Activated CD4-positive, alpha-beta memory T cell treated with anti-CD3 and anti-CD28 coated beads for 36 hours (primary cell): ENCODE measurements at regions of chr5 and their contacts with region 1.

Region 1: DNA sequence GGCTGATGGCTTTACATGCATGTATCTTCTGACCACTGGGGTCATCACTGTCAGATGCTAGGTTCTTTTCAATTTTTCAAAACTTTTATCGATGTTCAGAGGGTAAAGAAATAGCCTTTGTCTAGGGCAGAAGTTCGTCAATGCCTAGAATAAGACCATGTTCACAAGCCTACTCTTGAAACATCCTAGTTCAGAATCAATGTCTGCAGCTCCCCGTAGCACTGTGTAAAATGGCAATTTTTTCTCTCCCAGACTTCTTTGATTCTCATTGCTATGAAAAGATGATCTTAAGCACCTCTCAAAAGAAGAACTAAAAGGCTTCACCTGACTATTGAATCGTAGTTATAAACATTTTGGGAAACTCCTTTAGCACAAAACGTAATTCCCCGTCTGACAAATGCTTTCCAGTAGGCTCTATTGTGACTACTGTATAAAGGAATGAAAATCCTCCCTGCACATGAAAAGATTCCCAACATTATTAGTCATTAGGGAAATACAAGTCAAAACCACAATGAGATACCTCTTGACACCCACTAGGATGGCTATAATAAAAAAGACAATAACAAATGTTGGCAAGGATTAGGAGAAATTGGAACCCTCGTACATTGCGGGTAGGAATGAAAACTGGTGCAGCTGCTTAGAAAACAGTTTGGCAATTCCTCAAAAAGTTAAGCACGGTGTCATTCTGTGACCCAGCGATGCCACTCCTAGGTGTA is 263.5 kb downstream of the ARHGAP26 start:
- DNase-seq: no peak
- H3K4me3 Mint-ChIP-seq: no peak overlapping the region
- H3K27ac Mint-ChIP-seq: no peak overlapping the region
- H3K4me1 Mint-ChIP-seq: peaks cover 58% of the 10 kb centered on the region
- H3K27me3 Mint-ChIP-seq: no peaks in the 10 kb centered on the region

Region 2: GRCh38 chr5:142492781-142493281 is 540.9 kb before region 1 on chr5:
- CTCF ChIA-PET with region 1: no interaction called
- POLR2A ChIA-PET with region 1: no interaction called
- intact Hi-C with region 1: no loop called
- DNase-seq: no peak
- H3K4me3 Mint-ChIP-seq: no peak overlapping the region
- H3K27ac Mint-ChIP-seq: no peak overlapping the region
- H3K4me1 Mint-ChIP-seq: peaks cover 3% of the 10 kb centered on the region
- H3K27me3 Mint-ChIP-seq: no peaks in the 10 kb centered on the region

Region 3: GRCh38 chr5:143023411-143024096 is 10.1 kb before region 1 on chr5:
- CTCF ChIA-PET with region 1: interaction called, 3 read pairs
- POLR2A ChIA-PET with region 1: interaction called, 4 read pairs
- intact Hi-C with region 1: loop called (anchors 1 kb)
- DNase-seq: peak; percentile 85
- H3K4me3 Mint-ChIP-seq: no peak overlapping the region
- H3K27ac Mint-ChIP-seq: peak overlapping the region; percentile 59
- H3K4me1 Mint-ChIP-seq: peaks cover 53% of the 10 kb centered on the region
- H3K27me3 Mint-ChIP-seq: no peaks in the 10 kb centered on the region

Region 4: DNA sequence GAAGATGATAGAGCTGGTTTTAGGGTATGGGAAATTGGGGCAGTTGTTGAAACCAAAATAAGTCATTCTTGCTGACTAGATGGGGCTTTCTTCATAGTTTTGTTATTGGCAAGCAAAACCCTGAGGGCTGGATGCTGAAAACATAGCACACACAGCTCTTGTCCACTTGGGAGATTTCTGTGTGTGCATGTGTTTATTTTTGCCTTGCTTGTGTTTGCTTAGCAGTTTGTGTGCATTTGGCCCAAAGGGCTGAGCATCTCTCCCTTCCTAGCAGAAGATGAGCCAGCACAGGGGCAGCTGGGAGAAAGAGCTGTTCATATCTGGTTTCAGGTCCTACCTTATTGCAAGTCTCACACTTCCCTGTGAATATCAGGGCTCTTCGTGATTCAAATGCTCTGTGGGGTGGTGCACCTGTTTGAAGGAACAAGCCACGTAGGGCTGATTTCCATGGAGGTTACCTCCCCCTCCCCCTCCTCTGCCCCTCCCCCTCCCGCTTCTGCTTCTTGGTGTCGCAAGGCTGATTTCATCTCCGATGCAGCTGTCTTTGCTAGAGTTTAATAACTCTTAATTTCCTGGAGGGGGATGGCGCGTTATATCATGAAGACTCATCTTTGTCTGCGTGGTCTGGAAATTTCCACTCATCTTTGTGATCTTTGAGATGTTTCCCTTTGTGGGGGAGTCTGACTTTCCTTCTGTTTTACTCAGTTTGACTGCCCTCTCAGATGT is 33.0 kb after region 1 on chr5:
- CTCF ChIA-PET with region 1: no interaction called
- POLR2A ChIA-PET with region 1: interaction called, 4 read pairs
- intact Hi-C with region 1: loop called (anchors 5 kb)
- DNase-seq: peak; percentile 62
- H3K4me3 Mint-ChIP-seq: no peak overlapping the region
- H3K27ac Mint-ChIP-seq: peak overlapping the region; percentile 75
- H3K4me1 Mint-ChIP-seq: peaks cover 37% of the 10 kb centered on the region
- H3K27me3 Mint-ChIP-seq: no peaks in the 10 kb centered on the region

Region 5: GRCh38 chr5:143086908-143087637 is 53.4 kb after region 1 on chr5:
- CTCF ChIA-PET with region 1: no interaction called
- POLR2A ChIA-PET with region 1: no interaction called
- intact Hi-C with region 1: no loop called
- DNase-seq: no peak
- H3K4me3 Mint-ChIP-seq: no peak overlapping the region
- H3K27ac Mint-ChIP-seq: no peak overlapping the region
- H3K4me1 Mint-ChIP-seq: peaks cover 6% of the 10 kb centered on the region
- H3K27me3 Mint-ChIP-seq: no peaks in the 10 kb centered on the region

Region 6: DNA sequence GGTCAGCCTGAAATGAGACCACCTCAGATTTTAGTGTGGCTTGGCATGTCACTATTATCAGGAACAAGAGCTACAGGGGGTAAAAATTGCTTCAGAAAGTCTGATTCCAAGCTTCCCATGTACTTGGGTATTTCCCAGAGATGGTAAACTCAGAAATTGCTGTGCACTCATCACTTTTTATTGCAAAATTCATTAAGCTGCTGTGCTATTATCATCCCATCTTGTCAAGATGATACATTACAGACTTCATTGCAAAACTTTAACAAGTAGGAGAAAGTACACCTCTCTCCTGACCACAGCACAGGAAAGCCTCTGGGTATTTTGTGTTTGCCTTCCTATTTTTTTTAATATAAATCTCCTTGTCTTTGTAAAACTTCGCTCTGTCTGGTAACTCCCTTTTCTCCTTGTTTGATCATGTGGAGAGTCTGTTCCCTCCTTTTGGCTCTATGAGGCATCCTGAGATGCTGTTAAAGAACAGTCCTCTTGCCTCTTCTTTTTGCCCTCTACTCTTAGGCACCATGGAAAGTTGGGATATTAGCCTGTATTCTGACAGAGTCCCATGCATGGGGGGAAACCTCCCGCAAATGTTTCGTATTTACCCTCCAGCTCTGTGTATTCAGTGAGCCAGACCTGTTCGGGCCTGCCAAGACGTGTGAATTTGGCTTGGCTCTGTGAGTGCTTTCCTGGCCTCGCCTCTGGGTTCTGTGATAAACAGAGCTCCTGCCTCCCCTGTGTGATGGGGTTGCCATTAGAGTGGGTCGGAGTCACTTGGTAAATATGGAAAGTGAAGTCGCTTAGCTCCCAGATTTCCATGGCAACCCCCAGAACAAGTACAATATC is 109.1 kb after region 1 on chr5:
- CTCF ChIA-PET with region 1: no interaction called
- POLR2A ChIA-PET with region 1: no interaction called
- intact Hi-C with region 1: no loop called
- DNase-seq: no peak
- H3K4me3 Mint-ChIP-seq: no peak overlapping the region
- H3K27ac Mint-ChIP-seq: no peak overlapping the region
- H3K4me1 Mint-ChIP-seq: peaks cover 12% of the 10 kb centered on the region
- H3K27me3 Mint-ChIP-seq: no peaks in the 10 kb centered on the region